CD4-positive, alpha-beta memory T cell (primary cell): ENCODE measurements at regions of chr5 and their contacts with region 1.

Region 1: DNA sequence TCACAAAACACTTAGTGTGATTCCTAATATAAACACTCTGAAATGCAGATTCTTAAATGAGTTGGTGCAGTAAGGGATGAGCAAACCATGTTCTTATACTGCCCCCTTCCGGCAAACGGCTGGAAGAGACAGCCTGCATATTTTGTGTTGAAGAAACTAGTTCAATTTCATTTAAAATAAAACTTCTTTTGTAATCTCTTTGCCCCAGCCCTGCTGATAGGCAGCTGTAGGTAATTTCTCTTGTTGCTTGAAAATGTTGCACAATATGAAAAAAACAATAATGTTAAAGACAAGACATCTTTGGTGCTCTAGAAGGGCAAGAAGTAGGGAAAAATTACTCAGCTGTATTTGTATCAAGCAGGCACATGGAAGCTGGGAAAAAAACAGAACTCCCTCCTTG is 89.7 kb upstream of the CCNG1 start:
- DNase-seq: peak in 4 of 5 donors; percentile 37 to 46 (median 40)
- H3K4me3 ChIP-seq: no peak overlapping the region
- H3K4me3 Mint-ChIP-seq: no peak overlapping the region
- H3K27ac ChIP-seq: no peak overlapping the region
- H3K27ac Mint-ChIP-seq: no peak overlapping the region
- H3K4me1 ChIP-seq: no peaks in the 10 kb centered on the region
- H3K4me1 Mint-ChIP-seq: no peaks in the 10 kb centered on the region
- H3K27me3 ChIP-seq: no peaks in the 10 kb centered on the region
- H3K27me3 Mint-ChIP-seq: peaks cover 7 to 9% of the 10 kb centered on the region in 2 donors

Region 2: DNA sequence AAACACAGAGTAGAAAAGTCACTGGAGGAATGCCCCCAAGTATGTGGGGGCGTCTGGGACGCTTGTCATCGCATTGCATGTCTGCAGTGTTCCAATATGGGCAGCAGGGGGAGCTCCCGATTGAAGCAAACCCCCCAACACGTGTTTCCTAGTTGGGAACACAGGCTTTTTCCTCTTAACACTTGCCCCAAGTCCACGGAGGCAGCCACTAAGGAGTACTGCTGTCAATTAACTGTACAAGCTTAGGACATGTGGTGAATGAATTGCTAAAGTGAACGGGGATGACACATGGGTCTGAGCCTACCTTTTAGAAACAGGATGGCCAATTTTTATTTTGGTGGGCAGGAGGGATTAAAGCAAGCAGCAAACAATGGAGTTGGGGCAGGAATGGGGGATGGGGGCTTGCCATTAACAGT is 1803.3 kb before region 1 on chr5:
- CTCF ChIA-PET with region 1: no interaction called
- POLR2A ChIA-PET with region 1: no interaction called
- intact Hi-C with region 1: loop called (anchors 10 kb)
- DNase-seq: no peak
- H3K4me3 ChIP-seq: no peak overlapping the region
- H3K4me3 Mint-ChIP-seq: peak overlapping the region in 1 of 8 donors; percentile 39
- H3K27ac ChIP-seq: no peak overlapping the region
- H3K27ac Mint-ChIP-seq: no peak overlapping the region
- H3K4me1 ChIP-seq: peaks cover 4% of the 10 kb centered on the region
- H3K4me1 Mint-ChIP-seq: peaks cover 0 to 15% (median 7%) of the 10 kb centered on the region in 4 donors
- H3K27me3 ChIP-seq: peaks cover 16% of the 10 kb centered on the region
- H3K27me3 Mint-ChIP-seq: peaks cover 25 to 33% of the 10 kb centered on the region in 2 donors

Region 3: DNA sequence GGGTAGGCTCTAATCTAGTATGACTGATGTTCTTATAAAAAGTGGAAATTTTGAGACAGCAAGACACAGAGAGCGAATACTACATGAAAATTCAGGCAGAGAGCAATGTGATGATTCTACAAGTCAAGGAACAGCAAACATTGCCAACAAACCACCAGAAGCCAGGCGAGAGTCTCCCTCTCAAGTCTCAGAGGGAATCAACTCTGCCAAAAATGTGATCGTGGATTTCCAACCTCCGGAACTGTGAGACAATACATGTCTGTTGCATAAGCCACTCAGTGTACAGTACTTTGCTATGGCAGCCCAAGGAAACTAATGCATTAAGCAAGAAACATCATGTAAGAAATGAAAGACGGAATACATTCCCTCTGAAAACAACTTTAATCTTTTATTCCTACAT is 37.6 kb after region 1 on chr5:
- CTCF ChIA-PET with region 1: no interaction called
- POLR2A ChIA-PET with region 1: no interaction called
- intact Hi-C with region 1: no loop called
- DNase-seq: no peak
- H3K4me3 ChIP-seq: no peak overlapping the region
- H3K4me3 Mint-ChIP-seq: no peak overlapping the region
- H3K27ac ChIP-seq: no peak overlapping the region
- H3K27ac Mint-ChIP-seq: no peak overlapping the region
- H3K4me1 ChIP-seq: no peaks in the 10 kb centered on the region
- H3K4me1 Mint-ChIP-seq: no peaks in the 10 kb centered on the region
- H3K27me3 ChIP-seq: no peaks in the 10 kb centered on the region
- H3K27me3 Mint-ChIP-seq: peaks cover 3 to 8% of the 10 kb centered on the region in 2 donors